Endothelial cell of umbilical vein (primary cell): ENCODE measurements at regions of chr13 and their contacts with region 1.

Region 1: GRCh38 chr13:61954092-61954491 is 538.4 kb upstream of the PCDH20 start:
- DNase-seq: peak; percentile 60
- H3K4me3 ChIP-seq: no peak overlapping the region
- H3K27ac ChIP-seq: no peak overlapping the region
- H3K4me1 ChIP-seq: no peaks in the 10 kb centered on the region
- H3K27me3 ChIP-seq: no peaks in the 10 kb centered on the region
- CTCF ChIP-seq: no peak
- POLR2A ChIP-seq: no peak

Region 2: GRCh38 chr13:60627071-60627686 is 1326.9 kb before region 1 on chr13:
- CTCF ChIA-PET with region 1: interaction called, 25 read pairs
- POLR2A ChIA-PET with region 1: no interaction called
- dilution Hi-C with region 1: no loop called
- intact Hi-C with region 1: loop called (anchors 1 kb)
- DNase-seq: peak; percentile 42
- H3K4me3 ChIP-seq: no peak overlapping the region
- H3K27ac ChIP-seq: no peak overlapping the region
- H3K4me1 ChIP-seq: no peaks in the 10 kb centered on the region
- H3K27me3 ChIP-seq: peaks cover 2 to 22% of the 10 kb centered on the region in 2 experiments
- CTCF ChIP-seq: peak; percentile 63 to 72
- POLR2A ChIP-seq: no peak

Region 3: GRCh38 chr13:60654415-60654814 is 1299.7 kb before region 1 on chr13:
- CTCF ChIA-PET with region 1: no interaction called
- POLR2A ChIA-PET with region 1: no interaction called
- dilution Hi-C with region 1: no loop called
- intact Hi-C with region 1: loop called (anchors 10 kb)
- DNase-seq: peak; percentile 56
- H3K4me3 ChIP-seq: no peak overlapping the region
- H3K27ac ChIP-seq: no peak overlapping the region
- H3K4me1 ChIP-seq: no peaks in the 10 kb centered on the region
- H3K27me3 ChIP-seq: peaks cover 0 to 3% of the 10 kb centered on the region in 2 experiments
- CTCF ChIP-seq: peak; percentile 67 to 71
- POLR2A ChIP-seq: no peak

Region 4: GRCh38 chr13:61410669-61411297 is 543.3 kb before region 1 on chr13:
- CTCF ChIA-PET with region 1: interaction called, 7 read pairs
- POLR2A ChIA-PET with region 1: no interaction called
- dilution Hi-C with region 1: no loop called
- intact Hi-C with region 1: loop called (anchors 5 kb)
- DNase-seq: peak; percentile 24
- H3K4me3 ChIP-seq: no peak overlapping the region
- H3K27ac ChIP-seq: no peak overlapping the region
- H3K4me1 ChIP-seq: no peaks in the 10 kb centered on the region
- H3K27me3 ChIP-seq: peaks cover 27 to 37% of the 10 kb centered on the region in 2 experiments
- CTCF ChIP-seq: peak; percentile 11 to 38
- POLR2A ChIP-seq: no peak

Region 5: DNA sequence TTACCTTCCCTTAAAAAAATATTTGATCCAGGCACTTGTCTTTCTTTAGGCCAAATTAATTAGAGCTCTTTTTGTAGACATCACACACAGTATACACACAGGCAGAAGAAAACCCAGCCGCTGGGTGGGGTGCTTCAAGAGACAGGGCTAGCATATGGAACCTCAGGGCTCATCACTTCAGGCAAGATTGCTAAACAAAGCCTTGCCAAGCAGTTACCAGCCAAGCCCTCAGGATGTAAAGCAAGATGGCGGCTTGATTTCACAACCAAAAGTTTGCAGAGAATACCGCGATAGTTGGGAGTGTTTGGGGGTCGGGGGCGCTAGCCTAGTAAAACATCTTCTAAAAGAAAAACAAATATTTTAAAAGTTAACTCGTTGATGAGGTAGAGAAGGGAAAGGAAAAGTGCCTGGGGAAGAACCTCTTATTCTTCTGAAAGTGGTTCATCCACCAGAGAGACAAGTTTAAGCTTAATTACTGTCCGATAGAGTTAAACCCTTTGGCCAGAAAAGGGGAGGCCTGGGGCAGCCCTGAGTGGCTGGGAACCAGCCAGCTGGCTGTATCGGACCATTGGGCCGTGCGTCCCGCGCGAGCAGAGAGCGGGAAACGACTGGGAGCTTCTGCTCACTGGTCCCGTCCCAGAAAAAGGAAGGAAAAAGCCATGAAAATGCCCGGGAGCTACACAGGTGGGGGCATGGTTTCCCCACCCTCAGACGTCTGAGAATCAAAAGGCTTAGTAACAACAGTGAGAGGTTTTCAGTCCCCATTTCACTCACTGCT is 283.5 kb before region 1 on chr13:
- CTCF ChIA-PET with region 1: no interaction called
- POLR2A ChIA-PET with region 1: no interaction called
- dilution Hi-C with region 1: no loop called
- intact Hi-C with region 1: no loop called
- DNase-seq: no peak
- H3K4me3 ChIP-seq: no peak overlapping the region
- H3K27ac ChIP-seq: no peak overlapping the region
- H3K4me1 ChIP-seq: no peaks in the 10 kb centered on the region
- H3K27me3 ChIP-seq: no peaks in the 10 kb centered on the region
- CTCF ChIP-seq: no peak
- POLR2A ChIP-seq: no peak

Region 6: DNA sequence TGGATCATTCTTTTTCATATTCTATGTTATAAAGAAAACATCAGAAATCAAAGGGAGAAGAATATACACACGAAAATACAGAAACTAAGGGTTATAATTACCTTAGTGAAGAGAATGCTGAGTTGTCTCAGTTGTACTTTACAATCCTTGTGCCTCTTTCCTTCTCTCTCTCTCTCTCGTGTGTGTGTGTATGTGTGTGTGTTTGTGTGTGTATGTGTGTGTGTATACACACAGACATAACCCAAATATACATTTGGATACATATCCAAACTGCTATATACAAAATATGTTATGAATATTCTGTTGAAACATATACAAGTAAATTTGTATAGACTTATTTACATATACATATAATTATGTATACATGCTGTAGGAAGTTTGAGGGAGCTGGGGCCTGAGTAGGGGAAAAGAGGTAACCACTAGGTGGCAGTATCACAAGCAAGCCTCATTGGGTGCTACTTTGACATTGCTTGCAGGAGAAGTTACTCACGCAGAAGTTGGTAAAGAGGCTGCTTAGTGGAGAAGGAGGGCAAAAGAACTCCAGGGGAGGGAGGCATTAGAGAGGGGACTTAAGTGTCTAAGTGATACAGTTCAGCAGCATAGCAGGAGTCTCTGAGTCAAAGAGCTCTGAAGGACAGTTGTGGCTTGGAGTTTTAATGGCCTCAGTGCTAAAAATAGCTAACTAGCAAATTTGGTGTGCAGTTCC is 73.4 kb before region 1 on chr13:
- CTCF ChIA-PET with region 1: interaction called, 65 read pairs
- POLR2A ChIA-PET with region 1: no interaction called
- dilution Hi-C with region 1: no loop called
- intact Hi-C with region 1: loop called (anchors 1 kb)
- DNase-seq: peak; percentile 58
- H3K4me3 ChIP-seq: no peak overlapping the region
- H3K27ac ChIP-seq: no peak overlapping the region
- H3K4me1 ChIP-seq: no peaks in the 10 kb centered on the region
- H3K27me3 ChIP-seq: no peaks in the 10 kb centered on the region
- CTCF ChIP-seq: peak; percentile 48 to 70
- POLR2A ChIP-seq: no peak

Region 7: DNA sequence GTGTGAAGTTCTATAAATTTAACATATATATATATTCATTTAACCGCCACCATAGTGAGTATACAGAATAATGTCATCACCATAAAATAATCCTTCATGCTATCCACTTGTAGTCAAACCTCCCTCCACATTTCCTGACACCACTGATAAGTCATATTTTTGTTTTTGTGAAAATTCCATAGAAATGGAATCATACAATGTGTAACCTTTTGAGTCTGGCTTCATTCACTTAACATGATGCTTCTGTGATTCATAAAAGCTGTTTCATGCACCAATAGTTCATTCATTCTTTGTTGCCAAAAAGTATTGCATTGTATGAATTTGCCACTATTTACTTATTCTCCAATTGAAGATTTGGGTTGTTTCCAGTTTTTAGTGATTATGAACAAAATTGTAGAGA is 40.9 kb before region 1 on chr13:
- CTCF ChIA-PET with region 1: no interaction called
- POLR2A ChIA-PET with region 1: no interaction called
- dilution Hi-C with region 1: no loop called
- intact Hi-C with region 1: no loop called
- DNase-seq: no peak
- H3K4me3 ChIP-seq: no peak overlapping the region
- H3K27ac ChIP-seq: no peak overlapping the region
- H3K4me1 ChIP-seq: no peaks in the 10 kb centered on the region
- H3K27me3 ChIP-seq: no peaks in the 10 kb centered on the region
- CTCF ChIP-seq: no peak
- POLR2A ChIP-seq: no peak